ENCODE measurements at regions of chr15 and their contacts with region 1.

Region 1: DNA sequence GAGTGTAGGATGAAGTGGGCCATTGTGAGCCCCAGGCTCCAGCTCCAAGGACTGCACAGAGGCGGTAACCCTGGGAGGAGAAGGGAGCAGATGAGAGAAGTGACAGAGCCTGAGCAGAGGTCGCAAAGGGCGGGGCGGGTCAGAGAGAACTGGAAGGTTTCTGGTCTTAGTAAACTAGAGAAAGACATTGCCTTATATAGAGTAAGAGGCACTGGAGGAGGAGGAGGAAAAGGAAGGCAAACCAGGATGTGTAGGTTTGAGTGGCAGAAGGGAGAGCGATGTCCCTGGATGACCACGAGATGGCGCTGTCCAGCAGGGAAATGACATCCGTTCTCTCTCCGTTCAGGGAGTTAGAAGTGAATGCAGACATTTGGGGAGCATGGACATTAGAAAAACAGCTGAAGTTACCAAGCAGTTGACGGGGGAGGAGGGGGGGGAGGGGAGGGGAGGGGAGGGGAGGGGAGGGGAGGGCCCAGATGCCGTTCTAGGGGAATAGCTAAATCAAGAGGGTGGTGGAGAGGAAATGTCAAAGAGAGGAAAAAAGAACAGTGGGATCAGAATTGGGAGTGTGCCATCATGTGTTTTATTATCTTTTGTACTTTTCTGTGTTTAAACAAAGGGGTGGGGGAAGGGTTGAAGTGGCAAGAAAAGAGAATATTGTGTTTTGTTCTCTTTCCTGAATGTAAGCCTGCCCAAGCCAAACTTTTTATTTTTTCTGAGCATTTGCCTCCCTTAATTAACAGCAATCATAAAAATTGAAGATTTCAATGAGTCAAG is 48.8 kb downstream of the STARD5 start:
- H3K4me3 ChIP-seq: no peak overlapping the region
- H3K27ac ChIP-seq: no peak overlapping the region
- H3K4me1 ChIP-seq: 0 out of 2 replicates have a peak, but pooled peaks cover 2% of the 10 kb centered on the region
- CTCF ChIP-seq: peak; percentile 83

Region 2: GRCh38 chr15:81106560-81106959 is 168.6 kb before region 1 on chr15:
- CTCF ChIA-PET with region 1: interaction called, 530 read pairs
- POLR2A ChIA-PET with region 1: no interaction called
- H3K4me3 ChIP-seq: no peak overlapping the region
- H3K27ac ChIP-seq: no peak overlapping the region
- H3K4me1 ChIP-seq: no peaks in the 10 kb centered on the region
- CTCF ChIP-seq: peak; percentile 60

Region 3: DNA sequence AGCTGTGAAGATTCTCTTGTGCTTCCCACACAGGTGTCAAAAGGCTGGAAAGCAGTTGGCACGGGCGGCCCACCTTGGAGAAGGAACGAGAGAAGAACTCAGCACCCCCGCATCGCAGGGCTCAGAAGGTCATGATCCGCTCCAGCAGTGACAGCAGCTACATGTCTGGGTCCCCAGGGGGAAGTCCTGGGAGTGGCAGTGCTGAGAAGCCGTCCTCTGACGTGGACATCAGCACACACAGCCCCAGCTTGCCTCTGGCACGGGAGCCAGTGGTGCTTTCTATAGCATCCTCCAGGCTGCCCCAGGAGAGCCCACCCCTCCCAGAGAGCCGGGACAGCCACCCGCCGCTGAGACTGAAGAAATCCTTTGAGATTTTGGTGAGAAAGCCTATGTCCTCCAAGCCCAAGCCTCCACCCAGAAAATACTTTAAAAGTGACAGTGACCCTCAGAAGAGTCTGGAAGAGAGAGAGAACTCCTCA is 17.4 kb after region 1 on chr15:
- CTCF ChIA-PET with region 1: interaction called, 21 read pairs
- POLR2A ChIA-PET with region 1: no interaction called
- H3K4me3 ChIP-seq: no peak overlapping the region
- H3K27ac ChIP-seq: no peak overlapping the region
- H3K4me1 ChIP-seq: no peaks in the 10 kb centered on the region
- CTCF ChIP-seq: no peak

Region 4: DNA sequence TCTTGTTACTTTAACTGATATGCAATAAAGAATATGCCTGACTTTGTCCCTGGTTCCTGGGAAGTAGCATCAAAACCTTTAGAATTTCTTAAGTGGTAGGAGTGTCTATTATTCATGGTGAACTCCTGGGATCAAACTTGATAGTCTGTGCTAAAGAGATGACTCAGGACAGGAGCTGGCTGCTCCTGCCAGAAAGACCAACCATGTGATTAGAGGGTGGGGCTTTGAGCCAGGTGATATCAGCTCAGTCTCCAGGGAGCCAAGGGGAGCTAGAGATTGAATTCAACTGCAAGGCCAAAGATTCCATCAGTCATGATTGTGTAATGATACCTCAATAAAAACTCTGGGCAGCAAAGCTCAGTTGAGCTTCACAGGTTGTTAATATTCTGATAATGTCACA is 119.5 kb after region 1 on chr15:
- CTCF ChIA-PET with region 1: interaction called, 199 read pairs
- POLR2A ChIA-PET with region 1: no interaction called
- H3K4me3 ChIP-seq: no peak overlapping the region
- H3K27ac ChIP-seq: no peak overlapping the region
- H3K4me1 ChIP-seq: no peaks in the 10 kb centered on the region
- CTCF ChIP-seq: no peak

Region 5: GRCh38 chr15:81410318-81410753 is 135.2 kb after region 1 on chr15:
- CTCF ChIA-PET with region 1: interaction called, 21 read pairs
- POLR2A ChIA-PET with region 1: no interaction called
- H3K4me3 ChIP-seq: no peak overlapping the region
- H3K27ac ChIP-seq: no peak overlapping the region
- H3K4me1 ChIP-seq: peaks cover 4% of the 10 kb centered on the region
- CTCF ChIP-seq: peak; percentile 63; the same call in 1 of the 2 replicates

Measured in HEK293 (cell line).